Transverse colon (tissue), 4 donors: ENCODE measurements at regions of chr4 and their contacts with region 1.

Region 1: DNA sequence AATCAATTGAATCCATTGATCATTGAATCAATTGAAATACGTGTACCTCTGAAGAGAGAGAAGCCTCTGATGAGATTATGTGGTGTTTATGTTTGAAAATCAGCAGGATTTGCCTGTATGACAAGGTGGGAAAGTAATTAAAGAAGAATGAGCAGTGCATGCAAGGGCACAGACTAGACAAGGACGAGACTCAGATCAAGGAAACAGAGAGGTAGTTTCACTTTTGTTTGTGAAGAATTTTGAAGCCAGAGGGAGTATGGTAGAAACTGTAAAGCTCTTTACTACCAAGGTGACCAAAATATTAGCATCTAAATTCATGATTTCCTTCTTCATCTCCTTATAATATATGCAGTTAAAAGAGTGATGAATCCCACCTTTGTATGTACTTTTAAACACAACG is 1830.0 kb upstream of the IGFBP7 start:
- DNase-seq: no peak
- H3K4me3 ChIP-seq: peak overlapping the region in 2 of 4 donors; percentile 10 to 12
- H3K27ac ChIP-seq: no peak overlapping the region
- H3K4me1 ChIP-seq: no peaks in the 10 kb centered on the region
- H3K27me3 ChIP-seq: no peaks in the 10 kb centered on the region
- CTCF ChIP-seq: no peak
- EP300 ChIP-seq: no peak
- POLR2A ChIP-seq: no peak

Region 2: DNA sequence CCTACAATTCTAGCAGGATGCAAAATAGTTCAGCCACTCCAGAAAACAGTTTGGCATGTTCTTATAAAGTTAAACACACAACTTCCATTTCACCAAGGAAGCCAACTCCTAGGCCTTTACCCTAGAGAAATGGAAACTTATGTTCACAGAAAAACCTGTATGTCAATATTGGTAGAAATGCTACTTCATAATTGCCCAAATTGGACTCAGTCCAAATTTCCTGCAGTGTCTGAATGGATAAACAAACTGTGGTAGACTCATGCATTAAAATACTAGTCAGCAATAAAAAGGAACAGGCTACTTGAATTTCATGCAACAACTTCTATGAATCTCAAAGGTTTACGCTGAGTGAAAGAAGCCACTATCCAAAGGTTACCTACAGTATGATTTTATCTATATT is 91.1 kb before region 1 on chr4:
- in situ Hi-C with region 1: loop called in 3 of 4 experiments (anchors 25 kb)
- intact Hi-C with region 1: no loop called
- DNase-seq: no peak
- H3K4me3 ChIP-seq: no peak overlapping the region
- H3K27ac ChIP-seq: no peak overlapping the region
- H3K4me1 ChIP-seq: no peaks in the 10 kb centered on the region
- H3K27me3 ChIP-seq: no peaks in the 10 kb centered on the region
- CTCF ChIP-seq: no peak
- EP300 ChIP-seq: no peak
- POLR2A ChIP-seq: no peak

Region 3: DNA sequence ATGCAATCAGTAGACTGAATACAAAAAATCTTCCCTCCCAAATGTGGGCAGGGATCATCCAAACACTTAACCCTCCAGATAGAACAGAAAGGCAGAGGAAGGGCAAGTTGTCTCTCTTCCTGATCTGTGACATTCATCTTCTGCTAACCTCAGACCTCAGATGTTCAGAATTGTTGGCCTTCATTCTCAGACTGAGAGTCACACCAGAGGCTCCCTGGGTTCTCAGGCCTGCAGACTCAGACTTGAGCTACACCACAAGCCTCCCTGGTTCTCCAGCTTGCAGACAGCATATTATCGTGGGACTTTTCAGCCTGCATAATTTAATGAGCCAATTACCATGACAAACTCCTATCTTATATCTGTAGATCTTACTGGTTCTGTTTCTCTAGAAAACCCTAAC is 788.3 kb after region 1 on chr4:
- in situ Hi-C with region 1: no loop called
- intact Hi-C with region 1: no loop called
- DNase-seq: no peak
- H3K4me3 ChIP-seq: no peak overlapping the region
- H3K27ac ChIP-seq: no peak overlapping the region
- H3K4me1 ChIP-seq: no peaks in the 10 kb centered on the region
- H3K27me3 ChIP-seq: no peaks in the 10 kb centered on the region
- CTCF ChIP-seq: no peak
- EP300 ChIP-seq: no peak
- POLR2A ChIP-seq: no peak